ENCODE measurements at regions of chr3 and their contacts with region 1.

Region 1: GRCh38 chr3:146326670-146327543 is 76.0 kb upstream of the PLSCR4 start:
- DNase-seq: peak; percentile 35
- ATAC-seq: peak; percentile 78
- H3K4me3 ChIP-seq: no peak overlapping the region
- H3K27ac ChIP-seq: no peak overlapping the region
- H3K4me1 ChIP-seq: no peaks in the 10 kb centered on the region
- H3K27me3 ChIP-seq: no peaks in the 10 kb centered on the region
- CTCF ChIP-seq: peak; percentile 19 to 84 (median 65); a peak in 4 of 6 replicates
- POLR2A ChIP-seq: no peak
- RAD21 ChIP-seq: peak; percentile 83

Region 2: DNA sequence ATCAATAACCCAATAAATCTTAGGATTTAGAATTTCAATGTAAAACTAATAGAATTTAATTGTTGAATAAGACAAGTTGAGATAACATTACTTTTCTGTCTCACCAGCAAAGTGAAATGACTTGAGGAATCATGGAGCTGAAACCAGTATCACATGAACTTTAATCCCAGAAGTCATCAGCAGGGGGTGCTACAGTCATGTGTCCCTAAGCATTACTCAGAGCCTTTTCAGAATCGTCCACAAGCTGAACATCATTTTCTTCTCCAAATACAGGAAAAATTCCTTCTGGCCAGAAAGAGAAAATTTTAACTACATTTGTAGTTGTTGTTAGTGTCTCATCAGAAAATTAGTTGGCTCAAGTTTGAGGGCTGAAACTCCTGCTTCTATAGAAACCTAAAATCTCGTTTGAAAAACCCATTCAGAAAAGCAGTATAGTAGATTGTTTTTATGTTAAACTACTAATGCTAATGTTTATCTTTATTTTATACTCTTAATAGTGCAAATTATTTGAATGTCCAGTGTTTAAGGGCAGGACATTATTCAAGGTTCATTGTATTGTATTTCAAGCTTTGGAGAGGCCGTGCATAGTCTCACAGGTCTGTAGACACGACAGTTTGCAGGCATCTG is 550.0 kb before region 1 on chr3:
- CTCF ChIA-PET with region 1: interaction called, 10 read pairs
- POLR2A ChIA-PET with region 1: no interaction called
- RAD21 ChIA-PET with region 1: interaction called, 3 read pairs
- intact Hi-C with region 1: no loop called
- DNase-seq: peak; percentile 39
- ATAC-seq: peak; percentile 69; the same call in 1 of the 2 replicates
- H3K4me3 ChIP-seq: no peak overlapping the region
- H3K27ac ChIP-seq: no peak overlapping the region
- H3K4me1 ChIP-seq: no peaks in the 10 kb centered on the region
- H3K27me3 ChIP-seq: no peaks in the 10 kb centered on the region
- CTCF ChIP-seq: peak; percentile 52 to 72 (median 60); a peak in 5 of 6 replicates
- POLR2A ChIP-seq: no peak
- RAD21 ChIP-seq: peak; percentile 71

Region 3: GRCh38 chr3:146189519-146190173 is 137.3 kb before region 1 on chr3:
- CTCF ChIA-PET with region 1: interaction called, 141 read pairs
- POLR2A ChIA-PET with region 1: interaction called, 3 read pairs
- RAD21 ChIA-PET with region 1: interaction called, 17 to 20 read pairs
- intact Hi-C with region 1: loop called (anchors 1 kb)
- DNase-seq: peak; percentile 47
- ATAC-seq: peak; percentile 93
- H3K4me3 ChIP-seq: no peak overlapping the region
- H3K27ac ChIP-seq: no peak overlapping the region
- H3K4me1 ChIP-seq: peaks cover 0 to 6% of the 10 kb centered on the region in 2 experiments; a peak in 2 of 4 replicates
- H3K27me3 ChIP-seq: no peaks in the 10 kb centered on the region
- CTCF ChIP-seq: peak; percentile 62 to 73 (median 65); a peak in 5 of 6 replicates
- POLR2A ChIP-seq: no peak
- RAD21 ChIP-seq: peak; percentile 78

Region 4: DNA sequence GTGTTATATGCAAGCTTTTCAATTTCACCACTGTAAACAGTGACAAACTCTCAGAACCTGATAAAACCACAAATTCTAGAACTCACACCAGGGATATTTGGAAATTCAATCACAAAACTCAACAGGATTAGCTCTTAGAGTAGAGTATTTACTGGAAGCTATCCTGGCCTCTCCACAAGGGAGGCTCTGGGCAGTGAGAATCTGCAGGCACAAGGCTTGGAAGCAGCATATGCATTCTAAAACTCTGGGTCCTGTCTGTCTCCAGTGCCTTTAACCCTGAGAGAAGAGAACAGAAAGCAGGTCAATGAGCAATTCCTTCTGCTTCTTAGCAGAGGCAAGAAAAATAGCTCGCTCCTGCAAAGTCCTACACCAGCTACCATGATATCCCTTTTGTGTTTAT is 99.4 kb before region 1 on chr3:
- CTCF ChIA-PET with region 1: interaction called, 42 read pairs
- POLR2A ChIA-PET with region 1: no interaction called
- RAD21 ChIA-PET with region 1: interaction called, 7 to 13 read pairs
- intact Hi-C with region 1: loop called (anchors 1 kb)
- DNase-seq: no peak
- ATAC-seq: no peak
- H3K4me3 ChIP-seq: no peak overlapping the region
- H3K27ac ChIP-seq: no peak overlapping the region
- H3K4me1 ChIP-seq: peaks cover 1 to 11% of the 10 kb centered on the region in 2 experiments; a peak in 3 of 4 replicates
- H3K27me3 ChIP-seq: no peaks in the 10 kb centered on the region
- CTCF ChIP-seq: no peak
- POLR2A ChIP-seq: no peak
- RAD21 ChIP-seq: no peak

Region 5: DNA sequence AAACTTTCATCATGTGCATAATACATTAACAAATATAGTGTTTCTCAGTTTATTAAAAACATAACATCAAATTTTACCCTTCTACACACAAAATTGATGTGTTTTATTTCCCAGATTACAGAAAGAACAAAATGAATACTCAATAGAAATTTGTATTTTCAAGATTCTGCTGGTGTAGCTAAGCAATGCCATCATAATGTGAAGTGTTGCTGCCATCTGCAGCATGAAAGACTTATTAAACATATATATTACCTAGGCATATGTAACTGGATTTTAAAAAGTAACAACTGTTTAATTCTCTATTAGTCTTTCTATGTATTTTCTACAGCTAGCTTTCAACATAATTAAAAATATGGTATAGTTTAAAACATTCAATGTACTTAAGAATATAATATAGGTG is 250.8 kb after region 1 on chr3:
- CTCF ChIA-PET with region 1: interaction called, 40 read pairs
- POLR2A ChIA-PET with region 1: no interaction called
- RAD21 ChIA-PET with region 1: interaction called, 10 to 11 read pairs
- intact Hi-C with region 1: loop called (anchors 1 kb)
- DNase-seq: peak; percentile 47
- ATAC-seq: peak; percentile 63; the same call in 1 of the 2 replicates
- H3K4me3 ChIP-seq: no peak overlapping the region
- H3K27ac ChIP-seq: no peak overlapping the region
- H3K4me1 ChIP-seq: no peaks in the 10 kb centered on the region
- H3K27me3 ChIP-seq: no peaks in the 10 kb centered on the region
- CTCF ChIP-seq: peak in 2 of 3 experiments; percentile 61 to 75; a peak in 4 of 6 replicates
- POLR2A ChIP-seq: no peak
- RAD21 ChIP-seq: peak; percentile 88

Measured in HCT116 (cell line).